HAP-1 (cell line): ENCODE measurements at regions of chr5 and their contacts with region 1.

Region 1: DNA sequence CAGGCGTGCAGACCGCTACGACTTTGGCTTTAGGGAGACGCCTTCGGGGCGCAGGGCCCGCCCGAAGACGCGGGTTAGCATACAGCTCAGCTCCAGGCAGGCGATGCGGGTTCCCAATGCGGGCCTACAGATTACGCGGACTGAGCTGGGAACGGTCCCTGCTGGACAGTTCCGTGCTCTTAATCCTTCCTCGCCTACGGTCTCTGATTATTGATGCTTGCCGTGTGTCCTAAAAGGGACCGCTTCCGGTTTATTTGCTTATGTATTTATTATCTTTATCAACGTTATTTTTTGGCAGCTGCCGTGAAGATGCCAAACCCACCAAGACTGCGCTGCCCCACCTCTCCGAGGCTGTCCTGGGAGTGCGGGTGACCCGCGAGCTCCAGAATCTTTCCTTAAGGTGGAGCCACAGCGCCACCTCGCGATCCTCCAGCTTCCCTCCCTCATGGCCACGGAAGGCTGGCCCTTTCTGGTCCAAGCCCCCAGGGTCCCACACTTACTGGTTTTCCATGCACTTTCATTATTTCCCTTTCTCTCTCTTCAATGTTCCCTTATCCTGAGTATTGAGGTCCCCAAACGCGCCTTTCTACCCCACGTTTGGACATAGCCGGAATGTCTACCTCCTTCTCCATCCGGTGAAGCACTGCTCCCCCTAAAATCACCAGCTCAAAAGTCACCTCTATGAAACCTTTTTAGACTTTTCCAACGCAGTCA is 7.0 kb upstream of the EBF1 start:
- DNase-seq: peak; percentile 61 to 87
- H3K4me3 ChIP-seq: no peak overlapping the region
- H3K4me1 ChIP-seq: no peaks in the 10 kb centered on the region; the same call in 1 of the 2 replicates
- H3K27me3 ChIP-seq: peaks cover 22% of the 10 kb centered on the region

Region 2: DNA sequence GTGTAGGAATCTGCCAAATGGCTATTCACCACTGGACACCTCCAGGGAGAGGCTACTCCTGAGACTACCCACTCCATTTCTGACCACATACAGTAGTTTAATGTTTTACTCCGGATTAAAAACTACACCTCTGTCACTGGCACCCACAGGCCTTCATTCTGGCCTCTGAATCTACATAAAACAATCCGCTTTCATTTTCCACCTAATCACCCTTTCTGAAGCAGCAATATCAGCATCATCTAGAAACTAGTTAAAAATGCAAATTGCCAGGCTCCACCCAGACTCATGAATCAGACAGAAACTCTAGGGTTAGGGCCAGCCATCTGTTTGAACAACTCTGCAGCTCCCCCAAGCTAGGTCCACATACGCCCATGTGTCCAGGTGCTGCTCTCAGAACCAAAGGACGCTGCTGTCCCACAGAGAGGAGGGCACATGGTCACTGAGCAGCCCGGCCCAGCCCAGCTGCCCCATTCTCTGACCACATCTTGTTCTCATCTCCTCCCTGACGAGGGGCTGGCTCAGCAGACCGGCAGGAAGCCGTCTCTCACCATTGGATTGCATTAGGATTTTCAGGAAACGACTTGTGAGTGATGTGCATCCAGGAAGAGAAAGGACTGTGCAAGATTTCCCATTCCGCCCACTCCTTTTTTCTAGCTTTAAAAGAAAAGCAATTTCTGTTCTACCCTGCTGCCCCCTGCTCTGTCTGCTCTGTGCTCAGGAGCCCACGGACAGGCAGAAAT is 1565.8 kb before region 1 on chr5:
- in situ Hi-C with region 1: no loop called
- DNase-seq: no peak
- H3K4me3 ChIP-seq: no peak overlapping the region
- H3K4me1 ChIP-seq: no peaks in the 10 kb centered on the region
- H3K27me3 ChIP-seq: no peaks in the 10 kb centered on the region

Region 3: GRCh38 chr5:157820593-157821252 is 1286.0 kb before region 1 on chr5:
- in situ Hi-C with region 1: loop called (anchors 25 kb)
- DNase-seq: peak; percentile 62 to 67
- H3K4me3 ChIP-seq: no peak overlapping the region
- H3K4me1 ChIP-seq: peaks cover 31% of the 10 kb centered on the region
- H3K27me3 ChIP-seq: no peaks in the 10 kb centered on the region

Region 4: GRCh38 chr5:158695595-158696330 is 411.0 kb before region 1 on chr5:
- in situ Hi-C with region 1: loop called (anchors 5 kb)
- DNase-seq: peak; percentile 77 to 83
- H3K4me3 ChIP-seq: no peak overlapping the region
- H3K4me1 ChIP-seq: no peaks in the 10 kb centered on the region
- H3K27me3 ChIP-seq: peaks cover 24% of the 10 kb centered on the region